ENCODE measurements at regions of chr16 and their contacts with region 1.

Region 1: GRCh38 chr16:19375561-19376158 is 42.0 kb upstream of the TMC5 start:
- DNase-seq: no peak
- ATAC-seq: no peak

Region 2: DNA sequence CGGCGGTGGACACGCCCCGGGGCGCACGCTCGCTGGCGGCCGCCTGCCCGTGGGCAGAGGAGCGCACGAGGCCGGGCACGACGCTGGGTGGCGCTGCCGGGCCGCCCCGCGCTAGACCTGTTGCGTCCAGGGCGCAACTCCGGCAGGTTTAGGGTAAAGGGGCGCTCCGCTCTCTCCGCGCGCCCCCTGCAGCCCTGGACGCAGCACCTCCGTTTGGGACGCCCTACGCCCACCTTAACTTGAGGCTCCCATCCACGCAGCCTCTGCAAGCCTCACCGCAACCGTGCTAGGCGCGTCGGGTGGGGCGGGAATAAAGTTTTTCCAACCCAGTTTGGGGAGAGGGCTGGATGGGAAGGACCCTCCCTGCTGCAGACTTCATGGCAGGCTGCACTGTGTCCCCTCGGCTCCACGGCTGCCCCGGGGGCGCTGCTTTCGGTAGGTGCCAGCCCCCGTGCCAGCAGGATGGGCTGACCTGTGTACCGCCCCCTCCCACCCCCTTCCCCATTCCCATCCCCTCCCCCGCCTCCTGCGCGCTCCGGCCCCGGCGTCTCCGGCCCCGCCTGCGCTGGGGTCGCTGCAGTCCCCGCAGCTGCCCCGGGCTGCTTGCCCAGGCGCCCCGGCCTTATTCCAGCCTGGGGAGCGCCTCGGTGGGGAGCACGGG is 207.8 kb before region 1 on chr16 and contains the start of gene SYT17:
- intact Hi-C with region 1: loop called (anchors 10 kb)
- DNase-seq: peak; percentile 78
- ATAC-seq: peak; percentile 92
- total RNA-seq, gene SYT17: 0.54 TPM

Measured in Right ventricle myocardium inferior (tissue), 1 donor.